ENCODE measurements at regions of chr2 and their contacts with region 1.

Region 1: DNA sequence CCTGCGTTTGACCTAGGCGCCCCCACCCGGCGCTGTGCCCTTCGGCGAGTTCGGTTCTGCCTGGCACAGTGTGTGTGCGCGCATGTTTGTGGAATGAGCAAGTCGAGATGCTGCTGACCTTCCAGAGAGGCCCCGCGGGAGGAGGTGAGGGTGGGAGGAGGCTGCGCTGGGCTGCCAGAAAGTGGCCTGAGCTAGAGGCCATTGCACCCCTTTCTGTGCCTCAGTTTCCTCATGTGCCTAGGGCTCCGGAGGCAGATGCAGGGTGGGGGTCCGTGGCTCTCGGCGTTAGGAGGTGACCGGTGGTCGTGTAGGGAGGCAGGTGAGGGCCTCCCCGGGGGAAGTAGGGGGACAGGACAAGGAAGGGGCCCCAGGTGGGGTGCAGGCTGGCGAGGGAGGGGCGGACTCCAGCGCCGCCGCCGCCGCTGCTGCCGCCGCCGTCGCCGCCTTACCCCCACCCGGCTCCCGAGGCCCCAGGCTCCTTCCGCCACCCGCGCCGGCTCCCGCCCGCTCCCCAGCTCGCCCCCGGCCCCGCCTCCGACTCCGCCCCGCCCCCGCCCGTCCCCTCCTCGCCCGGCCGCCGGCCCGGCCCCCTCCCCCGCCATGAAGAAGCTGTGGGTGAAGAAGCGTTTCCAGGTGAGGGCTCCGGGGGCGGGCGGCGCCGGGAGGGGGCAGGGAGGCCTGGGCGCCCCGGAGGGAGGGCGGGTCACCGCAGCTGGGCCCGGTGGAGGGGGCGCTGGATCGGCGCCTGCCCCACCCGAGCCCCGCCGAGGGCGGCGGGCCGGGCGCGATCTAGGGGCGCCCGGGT is 7.0 kb downstream of the SPEG start:
- DNase-seq: peak in 1 of 2 experiments; percentile 64
- H3K4me3 ChIP-seq: peak overlapping the region; percentile 64
- H3K27ac ChIP-seq: no peak overlapping the region
- H3K4me1 ChIP-seq: peaks cover 10% of the 10 kb centered on the region
- H3K27me3 ChIP-seq: no peaks in the 10 kb centered on the region
- CTCF ChIP-seq: no peak

Region 2: GRCh38 chr2:219452838-219453317 is 11.2 kb after region 1 on chr2:
- CTCF ChIA-PET with region 1: no interaction called
- POLR2A ChIA-PET with region 1: interaction called, 11 read pairs
- intact Hi-C with region 1: no loop called
- DNase-seq: peak; percentile 85 to 89
- H3K4me3 ChIP-seq: peak overlapping the region; percentile 27; the same call in 1 of the 2 replicates
- H3K27ac ChIP-seq: peak overlapping the region; percentile 94
- H3K4me1 ChIP-seq: peaks cover 48% of the 10 kb centered on the region
- H3K27me3 ChIP-seq: no peaks in the 10 kb centered on the region
- CTCF ChIP-seq: no peak

Region 3: GRCh38 chr2:220228299-220229006 is 786.8 kb after region 1 on chr2:
- CTCF ChIA-PET with region 1: no interaction called
- POLR2A ChIA-PET with region 1: no interaction called
- intact Hi-C with region 1: no loop called
- DNase-seq: peak; percentile 80 to 97
- H3K4me3 ChIP-seq: peak overlapping the region; percentile 45
- H3K27ac ChIP-seq: peak overlapping the region; percentile 90
- H3K4me1 ChIP-seq: peaks cover 67% of the 10 kb centered on the region
- H3K27me3 ChIP-seq: no peaks in the 10 kb centered on the region
- CTCF ChIP-seq: no peak